ENCODE measurements at regions of chr5 and their contacts with region 1.

Region 1: GRCh38 chr5:34898258-34898895 is 16.9 kb downstream of the RAD1 start:
- DNase-seq: peak; percentile 39 to 56
- ATAC-seq: peak; percentile 51 to 84 (median 62)
- H3K4me3 ChIP-seq: no peak overlapping the region
- H3K27ac ChIP-seq: no peak overlapping the region
- H3K4me1 ChIP-seq: no peaks in the 10 kb centered on the region
- H3K27me3 ChIP-seq: no peaks in the 10 kb centered on the region
- CTCF ChIP-seq: peak; percentile 81

Region 2: GRCh38 chr5:34656001-34656699 is 242.2 kb before region 1 on chr5 and contains the start of gene RAI14:
- intact Hi-C with region 1: loop called in 1 of 2 experiments (anchors 2 kb)
- DNase-seq: peak; percentile 79 to 81
- ATAC-seq: peak; percentile 66 to 88 (median 80)
- H3K4me3 ChIP-seq: peak within 1 kb of the TSS; percentile 79
- H3K27ac ChIP-seq: peak within 1 kb of the TSS; percentile 56
- H3K4me1 ChIP-seq: peaks cover 4% of the 10 kb centered on the region
- H3K27me3 ChIP-seq: peaks cover 0 to 58% (median 5%) of the 10 kb centered on the region in 3 donors
- CTCF ChIP-seq: no peak
- total RNA-seq, gene RAI14: 1.9 to 4.3 (median 3.2) TPM

Region 3: GRCh38 chr5:34771064-34771463 is 127.3 kb before region 1 on chr5:
- intact Hi-C with region 1: no loop called
- DNase-seq: no peak
- ATAC-seq: no peak
- H3K4me3 ChIP-seq: no peak overlapping the region
- H3K27ac ChIP-seq: no peak overlapping the region
- H3K4me1 ChIP-seq: no peaks in the 10 kb centered on the region
- H3K27me3 ChIP-seq: no peaks in the 10 kb centered on the region
- CTCF ChIP-seq: no peak